Breast epithelium (tissue), 4 donors: ENCODE measurements at regions of chr18 and their contacts with region 1.

Region 1: GRCh38 chr18:36381075-36381474 is 83.6 kb downstream of the FHOD3 start:
- DNase-seq: no peak
- H3K4me3 ChIP-seq: no peak overlapping the region
- H3K27ac ChIP-seq: no peak overlapping the region
- H3K4me1 ChIP-seq: no peaks in the 10 kb centered on the region
- H3K27me3 ChIP-seq: no peaks in the 10 kb centered on the region
- CTCF ChIP-seq: no peak
- POLR2A ChIP-seq: no peak

Region 2: DNA sequence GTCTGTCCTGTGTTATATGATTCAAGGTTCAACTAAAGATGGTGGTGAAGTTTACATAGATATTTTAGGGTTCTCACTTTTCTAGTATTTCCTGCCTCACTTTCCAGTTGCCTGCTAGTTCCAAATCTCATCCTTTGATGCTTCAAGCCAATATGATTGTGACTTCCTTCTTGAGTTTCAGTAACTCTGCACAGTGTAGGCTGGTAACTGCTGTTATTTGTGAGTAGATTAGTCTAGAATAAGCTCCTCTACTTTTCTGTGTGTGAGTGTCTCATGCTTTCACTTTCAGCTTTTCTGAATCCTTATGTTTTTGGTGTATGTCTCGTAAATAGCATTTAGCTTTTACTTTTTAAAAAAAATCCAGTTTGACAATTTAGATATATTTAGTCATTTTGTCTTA is 756.9 kb before region 1 on chr18:
- intact Hi-C with region 1: no loop called
- DNase-seq: no peak
- H3K4me3 ChIP-seq: no peak overlapping the region
- H3K27ac ChIP-seq: no peak overlapping the region
- H3K4me1 ChIP-seq: no peaks in the 10 kb centered on the region
- H3K27me3 ChIP-seq: no peaks in the 10 kb centered on the region
- CTCF ChIP-seq: no peak
- POLR2A ChIP-seq: no peak

Region 3: DNA sequence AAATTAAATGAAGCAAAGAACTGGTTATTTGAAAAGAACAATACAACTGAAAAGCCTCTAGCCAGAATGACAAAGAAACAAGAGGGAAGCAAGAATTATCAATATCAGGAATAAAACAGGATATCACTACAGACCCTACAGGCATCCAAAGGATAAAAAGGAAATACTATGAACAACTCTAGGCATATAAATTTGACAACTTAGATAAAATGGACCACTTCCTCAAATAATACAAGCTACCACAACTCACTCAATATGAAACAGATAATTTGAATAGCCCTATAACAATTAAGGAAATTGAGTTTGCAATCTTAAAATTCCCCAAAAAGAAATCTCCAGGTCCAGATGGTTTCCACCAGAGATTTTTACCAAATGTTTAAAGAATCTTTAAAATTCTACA is 333.6 kb before region 1 on chr18:
- intact Hi-C with region 1: no loop called
- DNase-seq: no peak
- H3K4me3 ChIP-seq: no peak overlapping the region
- H3K27ac ChIP-seq: no peak overlapping the region
- H3K4me1 ChIP-seq: no peaks in the 10 kb centered on the region
- H3K27me3 ChIP-seq: no peaks in the 10 kb centered on the region
- CTCF ChIP-seq: no peak
- POLR2A ChIP-seq: no peak

Region 4: GRCh38 chr18:36352384-36352783 is 28.7 kb before region 1 on chr18:
- intact Hi-C with region 1: no loop called
- DNase-seq: no peak
- H3K4me3 ChIP-seq: no peak overlapping the region
- H3K27ac ChIP-seq: no peak overlapping the region
- H3K4me1 ChIP-seq: no peaks in the 10 kb centered on the region
- H3K27me3 ChIP-seq: no peaks in the 10 kb centered on the region
- CTCF ChIP-seq: no peak
- POLR2A ChIP-seq: no peak

Region 5: DNA sequence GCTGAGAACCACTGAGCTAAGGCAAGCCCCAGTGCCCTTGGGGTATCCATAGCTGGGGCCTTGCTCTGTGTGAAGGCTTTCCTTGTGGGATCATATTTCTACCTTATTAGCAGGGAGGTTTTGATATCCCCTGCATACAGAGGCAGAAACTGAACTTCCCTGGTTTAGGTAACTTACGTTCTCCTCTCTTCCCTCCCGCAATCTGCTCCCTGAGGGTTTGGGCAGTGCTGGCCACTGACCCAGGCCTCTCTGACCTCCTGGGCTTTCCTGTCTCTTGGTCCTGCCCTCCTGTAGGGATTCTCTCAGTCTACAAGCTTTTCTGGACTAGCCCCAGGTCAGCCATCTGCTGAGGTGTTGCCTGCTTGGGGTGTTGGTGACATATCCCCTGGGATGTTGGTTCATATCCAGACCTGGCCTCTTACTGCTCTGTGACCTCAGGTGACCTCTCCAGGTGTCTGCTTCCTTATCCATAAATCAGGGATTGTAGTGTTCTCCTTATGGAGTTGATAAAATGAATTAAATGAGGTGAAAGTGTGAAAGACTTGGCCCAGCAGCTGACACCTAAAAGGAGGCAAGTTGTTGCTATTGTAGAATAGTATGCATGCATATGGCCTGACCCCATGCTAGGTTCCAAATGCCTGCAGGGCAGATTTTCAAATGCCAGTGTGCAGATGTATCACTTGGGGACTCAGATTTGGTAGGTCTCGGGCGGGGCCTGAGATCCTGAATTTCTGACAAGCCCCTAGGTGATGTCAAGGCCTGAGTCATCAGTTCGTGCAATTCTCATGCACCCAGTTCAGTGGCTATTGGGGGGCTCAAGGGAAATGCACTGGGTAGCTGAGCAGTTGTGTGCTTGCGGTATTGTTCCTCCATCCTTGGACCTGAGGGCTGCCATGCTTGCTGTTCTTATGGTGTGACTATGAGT is 23.1 kb after region 1 on chr18:
- intact Hi-C with region 1: loop called (anchors 1 kb)
- DNase-seq: no peak
- H3K4me3 ChIP-seq: no peak overlapping the region
- H3K27ac ChIP-seq: no peak overlapping the region
- H3K4me1 ChIP-seq: no peaks in the 10 kb centered on the region
- H3K27me3 ChIP-seq: no peaks in the 10 kb centered on the region
- CTCF ChIP-seq: no peak
- POLR2A ChIP-seq: no peak

Region 6: GRCh38 chr18:36912887-36913286 is 531.8 kb after region 1 on chr18:
- intact Hi-C with region 1: no loop called
- DNase-seq: no peak
- H3K4me3 ChIP-seq: no peak overlapping the region
- H3K27ac ChIP-seq: no peak overlapping the region
- H3K4me1 ChIP-seq: no peaks in the 10 kb centered on the region
- H3K27me3 ChIP-seq: no peaks in the 10 kb centered on the region
- CTCF ChIP-seq: no peak
- POLR2A ChIP-seq: no peak